GM13977 (cell line): ENCODE measurements at regions of chr2 and their contacts with region 1.

Region 1: DNA sequence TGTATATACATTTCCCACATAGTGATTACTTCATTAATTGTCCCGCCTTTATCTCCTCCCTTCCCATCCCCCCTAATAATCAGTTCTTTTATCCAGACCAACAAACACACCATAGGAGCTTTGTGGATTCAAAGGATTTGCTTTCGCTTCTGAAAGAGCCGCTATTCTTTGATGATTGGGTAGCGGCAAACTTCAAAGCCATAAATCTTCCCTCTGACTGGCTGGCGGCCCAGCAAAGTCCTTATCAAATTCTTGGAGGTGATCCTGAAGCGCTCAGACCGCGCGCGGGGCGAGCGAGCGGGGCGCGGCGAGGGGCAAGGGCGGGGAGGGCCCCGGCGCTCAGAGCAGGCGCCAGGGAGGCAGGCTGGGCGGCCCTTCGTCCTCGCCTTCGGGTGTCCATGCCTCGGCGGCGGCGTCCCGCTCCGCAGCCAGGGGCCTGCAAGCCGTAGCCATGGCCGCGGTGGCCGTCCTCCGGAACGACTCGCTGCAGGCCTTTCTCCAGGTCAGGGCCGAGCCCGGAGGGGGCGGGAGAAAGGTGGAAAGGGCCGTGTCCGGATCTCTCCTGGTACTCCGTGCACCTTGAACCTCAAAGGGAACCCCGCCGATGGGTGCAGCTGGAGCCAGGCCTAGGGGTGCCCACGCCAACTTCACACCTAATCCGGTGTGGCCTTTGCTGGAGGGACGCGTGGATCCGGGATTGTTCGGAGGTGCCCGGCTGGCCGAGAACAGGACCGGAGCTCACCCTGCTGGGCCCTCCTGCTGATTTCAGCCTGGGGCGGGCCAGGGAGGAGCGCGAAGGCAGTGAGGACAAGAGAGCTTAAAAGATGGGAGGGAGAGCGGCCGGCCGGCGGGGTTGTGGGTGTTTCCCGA is at the start of gene SP5:
- DNase-seq: peak; percentile 65
- CTCF ChIP-seq: no peak

Region 2: GRCh38 chr2:170409164-170409535 is 306.1 kb before region 1 on chr2:
- in situ Hi-C with region 1: loop called (anchors 25 kb)
- DNase-seq: peak; percentile 45
- CTCF ChIP-seq: peak; percentile 80

Region 3: GRCh38 chr2:170917219-170917913 is 202.1 kb after region 1 on chr2:
- in situ Hi-C with region 1: no loop called
- DNase-seq: no peak
- CTCF ChIP-seq: no peak

Region 4: DNA sequence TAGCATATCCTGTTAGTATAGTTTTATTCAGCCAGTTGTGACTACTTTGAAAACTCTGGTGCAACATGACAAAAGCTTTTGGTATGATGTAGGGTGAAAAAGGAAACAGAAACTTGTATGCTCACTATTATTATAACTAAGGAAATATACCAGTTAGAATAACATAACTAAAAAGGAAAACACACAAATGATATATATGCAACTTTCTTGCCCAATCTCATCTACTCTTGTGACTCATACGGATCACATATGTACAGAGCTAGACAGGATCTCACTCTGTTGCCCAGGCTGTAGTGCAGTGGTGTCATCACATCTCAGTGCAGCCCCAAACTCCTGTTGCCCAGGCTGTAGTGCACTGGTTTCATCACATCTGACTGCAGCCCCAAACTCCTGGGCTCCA is 457.8 kb after region 1 on chr2:
- in situ Hi-C with region 1: no loop called
- DNase-seq: no peak
- CTCF ChIP-seq: no peak

Region 5: GRCh38 chr2:172084734-172085459 is 1369.6 kb after region 1 on chr2:
- in situ Hi-C with region 1: loop called (anchors 10 kb)
- DNase-seq: peak; percentile 92
- CTCF ChIP-seq: no peak